ENCODE measurements at regions of chr12 and their contacts with region 1.

Region 1: GRCh38 chr12:58465418-58465817 is 454.9 kb downstream of the LRIG3 start:
- DNase-seq: no peak
- H3K4me3 ChIP-seq: no peak overlapping the region
- H3K4me3 Mint-ChIP-seq: no peak overlapping the region
- H3K27ac Mint-ChIP-seq: no peak overlapping the region
- H3K4me1 ChIP-seq: no peaks in the 10 kb centered on the region
- H3K4me1 Mint-ChIP-seq: peaks cover 4% of the 10 kb centered on the region
- H3K27me3 ChIP-seq: no peaks in the 10 kb centered on the region
- H3K27me3 Mint-ChIP-seq: no peaks in the 10 kb centered on the region
- CTCF ChIP-seq: no peak

Region 2: DNA sequence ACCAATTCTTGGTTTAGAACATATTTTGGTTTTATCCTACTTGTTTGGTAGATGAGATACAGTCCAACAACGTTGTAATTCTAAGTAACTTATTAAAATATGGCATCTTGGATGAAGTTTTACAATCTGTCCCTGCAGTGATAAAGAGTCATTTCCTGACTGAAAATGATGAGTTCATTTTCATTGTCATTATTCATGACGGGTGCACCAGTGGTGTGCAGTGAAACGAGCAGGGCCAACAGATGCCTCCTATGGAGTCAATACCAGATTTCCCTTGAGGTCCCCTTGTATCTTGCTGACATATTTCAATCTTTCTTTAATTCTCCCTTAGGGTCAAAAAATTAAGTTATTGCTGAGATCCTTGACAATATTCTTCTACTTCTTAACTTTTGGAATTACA is 16.4 kb after region 1 on chr12:
- CTCF ChIA-PET with region 1: no interaction called
- POLR2A ChIA-PET with region 1: no interaction called
- intact Hi-C with region 1: loop called (anchors 2 kb)
- DNase-seq: no peak
- H3K4me3 ChIP-seq: no peak overlapping the region
- H3K4me3 Mint-ChIP-seq: no peak overlapping the region
- H3K27ac Mint-ChIP-seq: no peak overlapping the region
- H3K4me1 ChIP-seq: no peaks in the 10 kb centered on the region
- H3K4me1 Mint-ChIP-seq: no peaks in the 10 kb centered on the region
- H3K27me3 ChIP-seq: no peaks in the 10 kb centered on the region
- H3K27me3 Mint-ChIP-seq: no peaks in the 10 kb centered on the region
- CTCF ChIP-seq: no peak